ENCODE measurements at regions of chr5 and their contacts with region 1.

Region 1: GRCh38 chr5:138178516-138179276 is at the starts of genes BRD8 and KIF20A:
- H3K4me3 ChIP-seq: peak within 1 kb of the TSS; percentile 70
- H3K27ac ChIP-seq: peak within 1 kb of the TSS; percentile 90
- H3K4me1 ChIP-seq: 0 out of 2 replicates have a peak, but pooled peaks cover 3% of the 10 kb centered on the region
- CTCF ChIP-seq: no peak

Region 2: DNA sequence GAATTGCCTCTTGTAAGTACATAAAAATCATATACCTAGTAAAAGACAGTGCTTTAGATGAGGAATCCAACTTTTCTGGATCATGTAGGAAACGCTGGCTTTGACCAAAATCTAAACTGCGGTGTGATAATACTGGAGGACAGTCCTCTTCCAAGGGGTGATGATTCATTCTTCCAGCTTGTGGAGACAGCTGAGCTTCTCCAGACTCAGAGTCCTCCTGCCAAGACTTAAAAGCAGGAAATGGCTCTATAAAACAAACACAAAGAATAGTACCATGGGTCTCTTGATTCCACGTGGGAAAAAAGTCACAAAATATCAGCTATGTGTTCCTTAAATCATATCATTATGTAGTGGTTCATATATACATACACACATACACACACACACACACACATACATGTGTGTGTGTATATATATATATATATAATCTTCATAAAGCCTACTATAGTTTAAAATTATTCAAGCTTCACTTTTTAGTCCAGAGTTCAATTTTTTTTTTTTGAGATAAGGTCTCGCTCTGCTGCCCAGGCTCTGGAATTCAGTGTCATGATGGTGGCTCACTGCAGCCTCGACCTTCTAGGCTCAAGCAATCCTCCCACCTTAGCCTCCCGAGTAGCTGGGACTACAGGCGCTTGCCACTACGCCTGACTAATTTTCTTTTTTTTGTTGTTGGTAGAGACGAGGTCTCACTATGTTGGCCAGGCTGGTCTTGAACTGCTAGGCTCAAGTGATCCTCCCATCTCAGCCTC is 224.4 kb before region 1 on chr5:
- CTCF ChIA-PET with region 1: no interaction called
- POLR2A ChIA-PET with region 1: no interaction called
- H3K4me3 ChIP-seq: no peak overlapping the region
- H3K27ac ChIP-seq: no peak overlapping the region
- H3K4me1 ChIP-seq: no peaks in the 10 kb centered on the region
- CTCF ChIP-seq: no peak

Region 3: GRCh38 chr5:138213161-138214029 is 34.7 kb after region 1 on chr5 and contains the start of gene CDC23:
- CTCF ChIA-PET with region 1: interaction called, 7 read pairs
- POLR2A ChIA-PET with region 1: interaction called, 22 read pairs
- H3K4me3 ChIP-seq: peak within 1 kb of the TSS; percentile 94
- H3K27ac ChIP-seq: peak within 1 kb of the TSS; percentile 77
- H3K4me1 ChIP-seq: peaks cover 7% of the 10 kb centered on the region; the same call in 1 of the 2 replicates
- CTCF ChIP-seq: no peak; the same call in 1 of the 2 replicates

Region 4: GRCh38 chr5:138282920-138283742 is 104.4 kb after region 1 on chr5:
- CTCF ChIA-PET with region 1: interaction called, 19 read pairs
- POLR2A ChIA-PET with region 1: no interaction called
- H3K4me3 ChIP-seq: no peak overlapping the region
- H3K27ac ChIP-seq: no peak overlapping the region
- H3K4me1 ChIP-seq: no peaks in the 10 kb centered on the region
- CTCF ChIP-seq: peak; percentile 74

Region 5: DNA sequence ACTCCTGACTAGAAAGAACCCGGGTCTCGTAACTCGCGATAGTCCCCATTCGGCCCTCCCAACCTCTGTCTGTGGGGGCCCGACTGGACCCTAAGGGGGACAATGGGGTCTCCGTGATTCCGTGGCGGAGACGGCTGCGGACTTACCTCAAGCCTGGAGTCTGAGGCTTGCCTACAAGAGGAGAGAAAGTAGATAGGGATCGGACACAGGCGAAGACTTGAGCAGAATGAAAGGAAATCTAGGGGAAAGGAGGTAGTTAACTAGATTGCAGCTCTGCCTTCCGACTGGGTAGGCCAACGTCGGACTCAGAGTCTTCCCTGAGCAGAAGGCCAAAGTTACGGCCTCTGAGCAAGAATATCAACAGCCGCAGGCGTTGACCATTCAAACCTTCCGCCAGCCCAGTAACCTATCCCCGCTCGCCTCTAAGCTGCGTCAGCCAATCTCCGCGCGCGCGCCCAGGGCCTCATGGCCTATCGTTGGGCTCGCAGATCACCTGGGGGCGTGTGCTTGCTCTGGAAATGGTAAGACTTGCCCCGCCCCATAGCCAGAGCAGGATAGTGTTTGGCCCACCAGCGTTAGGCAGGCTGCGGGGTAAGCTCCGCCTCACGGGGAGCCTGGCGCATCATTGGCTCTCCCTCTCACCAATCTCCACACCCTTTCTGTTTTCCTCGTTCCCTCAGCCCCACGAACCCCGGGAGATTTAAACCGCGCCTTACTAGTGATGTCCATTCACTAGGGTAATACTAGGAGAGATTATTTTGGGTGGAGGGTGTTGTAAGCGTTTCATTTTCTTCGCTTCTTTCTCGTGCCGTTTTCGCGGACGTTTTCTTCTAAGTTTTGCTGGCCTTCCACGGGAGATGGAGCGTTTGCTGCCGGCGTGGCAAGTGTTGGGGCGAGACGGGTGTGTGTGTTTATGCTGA is 153.0 kb after region 1 on chr5 and contains the start of gene CDC25C:
- CTCF ChIA-PET with region 1: no interaction called
- POLR2A ChIA-PET with region 1: interaction called, 20 read pairs
- H3K4me3 ChIP-seq: peak within 1 kb of the TSS; percentile 78
- H3K27ac ChIP-seq: peak within 1 kb of the TSS; percentile 75
- H3K4me1 ChIP-seq: peaks cover 4% of the 10 kb centered on the region; the same call in 1 of the 2 replicates
- CTCF ChIP-seq: no peak

Region 6: DNA sequence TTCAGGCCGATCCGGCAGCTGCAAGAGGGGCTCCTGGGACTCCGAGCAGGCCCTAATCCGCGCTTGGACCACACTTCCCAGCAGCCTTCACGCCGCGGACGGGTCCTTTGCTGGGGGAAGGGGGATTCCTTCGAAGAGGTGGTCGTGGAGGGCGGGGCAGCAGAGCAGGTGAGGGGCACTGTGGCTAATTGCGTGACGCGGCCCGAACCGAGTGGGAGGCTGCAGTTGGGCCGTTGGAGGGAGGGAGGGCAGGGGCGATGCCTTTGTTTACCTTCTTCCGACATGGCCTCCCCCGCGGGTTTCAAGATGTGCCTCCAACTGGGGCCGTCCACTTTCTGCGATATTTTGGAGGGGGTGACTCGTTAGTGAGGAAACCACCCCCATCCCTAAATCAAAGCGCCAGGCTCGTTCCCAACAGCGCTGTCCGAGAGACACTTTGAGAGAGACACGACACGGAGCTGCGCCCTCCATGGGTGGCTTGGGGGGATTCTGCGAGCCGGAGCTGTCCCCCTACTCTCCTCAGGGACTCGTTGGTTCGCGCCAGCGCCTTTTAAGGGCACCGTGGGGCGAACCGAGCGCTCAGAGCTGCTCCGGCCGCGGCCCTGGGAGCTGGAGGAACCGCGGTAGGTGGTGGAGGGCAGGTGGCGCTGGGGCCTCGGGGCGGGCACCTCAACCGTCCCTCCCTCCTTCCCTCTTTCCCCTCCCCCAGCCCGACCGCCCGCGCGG is 159.2 kb after region 1 on chr5 and contains the start of gene FAM53C:
- CTCF ChIA-PET with region 1: no interaction called
- POLR2A ChIA-PET with region 1: interaction called, 10 read pairs
- H3K4me3 ChIP-seq: peak within 1 kb of the TSS; percentile 83
- H3K27ac ChIP-seq: peak within 1 kb of the TSS; percentile 98
- H3K4me1 ChIP-seq: peaks cover 8% of the 10 kb centered on the region
- CTCF ChIP-seq: peak; percentile 58; the same call in 1 of the 2 replicates